Sciatic nerve (tissue), 2 donors: ENCODE measurements at regions of chr1 and their contacts with region 1.

Region 1: DNA sequence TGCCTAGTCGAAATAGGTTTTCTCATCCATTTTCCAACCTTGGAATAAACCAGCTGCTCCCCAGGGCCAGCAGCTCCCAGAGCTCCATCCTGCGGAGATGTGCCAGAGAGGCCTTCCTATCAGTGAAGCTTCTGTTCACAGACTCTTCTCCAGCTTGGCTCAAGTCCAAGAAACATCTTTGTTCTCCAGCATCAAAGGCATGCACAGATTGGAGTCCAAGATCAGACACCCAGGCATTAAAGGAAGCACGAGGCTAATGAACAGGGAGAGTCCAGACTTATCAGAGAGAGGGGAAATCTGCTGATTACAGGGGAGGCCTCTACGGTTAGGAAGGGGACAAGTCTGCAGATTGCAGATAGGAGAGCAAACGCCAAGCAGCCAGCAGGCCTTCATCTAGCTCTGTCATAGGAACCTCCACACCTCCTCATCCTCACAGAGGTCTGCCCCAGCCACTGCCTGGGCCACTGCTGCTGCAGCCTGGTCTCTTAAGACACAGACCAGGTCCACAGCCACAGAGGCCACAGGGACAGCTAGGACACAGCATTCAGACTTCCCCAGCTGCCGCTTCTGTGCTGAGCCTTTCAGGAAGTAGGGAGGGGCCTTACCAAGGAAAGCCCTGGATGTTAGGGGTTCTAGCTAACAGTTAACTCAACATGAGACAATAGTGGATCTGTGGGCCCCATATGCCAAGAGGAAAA is 3.4 kb downstream of the PRR9 start:
- DNase-seq: no peak
- ATAC-seq: no peak

Region 2: DNA sequence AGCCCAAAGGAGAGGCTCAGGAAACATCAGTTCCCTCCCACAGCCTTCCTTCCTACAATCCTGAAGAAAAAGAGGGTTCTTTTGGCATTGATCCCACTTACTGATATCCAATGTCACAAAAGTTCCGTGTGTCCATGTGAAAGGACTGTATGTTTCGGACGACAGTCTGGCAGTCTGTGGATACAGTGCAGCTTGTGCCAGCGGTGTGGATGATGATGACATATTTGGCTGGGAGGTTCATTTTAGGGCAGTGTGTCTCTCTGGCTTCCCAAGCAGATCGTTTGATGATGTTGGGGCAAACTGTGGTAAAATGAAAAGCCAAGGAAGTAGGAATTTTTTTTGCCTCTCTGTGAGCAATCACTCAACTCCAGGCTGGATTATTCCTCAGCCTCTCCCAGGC is 81.6 kb after region 1 on chr1:
- intact Hi-C with region 1: no loop called
- DNase-seq: no peak
- ATAC-seq: no peak

Region 3: DNA sequence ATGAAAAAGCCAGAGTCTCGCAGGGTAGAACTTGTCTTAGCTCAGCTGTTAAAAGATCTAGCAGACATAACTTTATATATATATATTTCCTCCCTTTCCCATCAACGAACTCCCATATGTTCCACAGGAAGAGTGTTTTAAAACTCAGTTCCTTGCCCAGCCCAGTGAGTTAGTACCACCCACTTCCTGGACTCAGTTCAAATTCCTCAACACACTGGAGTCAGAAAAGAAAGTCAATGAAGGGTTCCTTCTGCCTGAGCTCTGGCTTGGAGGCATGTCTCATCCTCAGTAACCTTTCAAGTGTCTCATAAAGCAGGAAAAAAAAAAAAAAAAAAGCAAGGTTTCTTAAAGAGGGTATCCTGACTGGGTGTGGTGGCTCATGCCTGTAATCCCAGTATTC is 955.6 kb after region 1 on chr1:
- intact Hi-C with region 1: loop called (anchors 5 kb)
- DNase-seq: no peak
- ATAC-seq: peak; percentile 59